ENCODE measurements at regions of chr14 and their contacts with region 1.

Region 1: DNA sequence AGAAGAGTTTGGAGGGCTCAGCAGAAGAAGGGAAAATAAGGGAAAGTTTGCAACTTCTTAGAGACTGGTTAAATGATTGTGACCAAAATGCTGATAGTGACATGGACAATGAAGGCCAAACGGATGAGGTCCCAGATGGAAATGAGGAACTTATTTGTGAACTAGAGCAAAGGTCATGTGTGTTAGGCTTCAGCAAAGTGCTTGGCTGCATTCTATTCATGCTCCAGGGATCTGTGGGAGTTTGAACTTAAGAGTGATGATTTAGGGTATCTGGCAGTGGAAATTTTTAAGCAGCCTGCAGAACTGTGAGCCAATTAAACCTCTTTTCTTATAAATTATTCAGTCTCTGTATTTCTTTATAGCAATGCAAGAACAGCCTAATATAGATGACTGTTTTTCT is 88.9 kb upstream of the ARHGAP5 start:
- DNase-seq: no peak
- ATAC-seq: no peak

Region 2: DNA sequence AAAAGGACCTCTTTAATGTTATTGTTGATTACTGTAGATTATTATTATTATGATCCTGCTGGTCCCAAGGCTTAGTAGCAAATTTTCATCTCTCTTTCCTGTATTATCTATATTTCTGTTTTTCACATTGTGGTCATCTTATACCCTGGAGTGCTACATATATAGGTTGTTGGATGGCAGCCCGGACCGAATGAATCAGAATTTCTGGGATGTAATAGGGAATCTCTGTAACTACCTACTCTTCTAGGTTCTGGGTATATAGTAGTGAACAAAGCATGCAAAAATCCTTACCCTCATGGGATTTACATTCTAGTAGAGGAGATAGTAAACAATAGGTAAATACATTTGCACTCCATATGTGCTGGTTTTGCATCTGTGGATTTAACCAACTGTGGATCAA is 395.6 kb before region 1 on chr14:
- intact Hi-C with region 1: loop called (anchors 5 kb)
- DNase-seq: no peak
- ATAC-seq: no peak

Measured in sciatic nerve (tissue), 2 donors.